Caco-2 (cell line): ENCODE measurements at regions of chr17 and their contacts with region 1.

Region 1: GRCh38 chr17:33520426-33521330 is 227.6 kb upstream of the ASIC2 start:
- DNase-seq: peak; percentile 70 to 75
- H3K4me3 ChIP-seq: no peak overlapping the region
- H3K4me3 Mint-ChIP-seq: no peak overlapping the region
- H3K27ac Mint-ChIP-seq: no peak overlapping the region
- H3K4me1 ChIP-seq: no peaks in the 10 kb centered on the region
- H3K4me1 Mint-ChIP-seq: no peaks in the 10 kb centered on the region
- H3K27me3 ChIP-seq: no peaks in the 10 kb centered on the region; the same call in none of the 2 replicates
- H3K27me3 Mint-ChIP-seq: peaks cover 16% of the 10 kb centered on the region
- CTCF ChIP-seq: peak; percentile 85 to 89

Region 2: GRCh38 chr17:33647956-33648355 is 127.3 kb after region 1 on chr17:
- CTCF ChIA-PET with region 1: interaction called, 3 read pairs
- POLR2A ChIA-PET with region 1: no interaction called
- intact Hi-C with region 1: loop called (anchors 5 kb)
- DNase-seq: peak in 1 of 2 experiments; percentile 28
- H3K4me3 ChIP-seq: no peak overlapping the region
- H3K4me3 Mint-ChIP-seq: no peak overlapping the region
- H3K27ac Mint-ChIP-seq: no peak overlapping the region
- H3K4me1 ChIP-seq: no peaks in the 10 kb centered on the region
- H3K4me1 Mint-ChIP-seq: no peaks in the 10 kb centered on the region
- H3K27me3 ChIP-seq: no peaks in the 10 kb centered on the region
- H3K27me3 Mint-ChIP-seq: peaks cover 29% of the 10 kb centered on the region
- CTCF ChIP-seq: peak; percentile 70 to 80

Region 3: GRCh38 chr17:33674685-33675084 is 154.0 kb after region 1 on chr17:
- CTCF ChIA-PET with region 1: no interaction called
- POLR2A ChIA-PET with region 1: no interaction called
- intact Hi-C with region 1: loop called (anchors 1 kb)
- DNase-seq: peak; percentile 63 to 65
- H3K4me3 ChIP-seq: no peak overlapping the region
- H3K4me3 Mint-ChIP-seq: no peak overlapping the region
- H3K27ac Mint-ChIP-seq: no peak overlapping the region
- H3K4me1 ChIP-seq: no peaks in the 10 kb centered on the region
- H3K4me1 Mint-ChIP-seq: no peaks in the 10 kb centered on the region
- H3K27me3 ChIP-seq: no peaks in the 10 kb centered on the region; the same call in none of the 2 replicates
- H3K27me3 Mint-ChIP-seq: peaks cover 18% of the 10 kb centered on the region
- CTCF ChIP-seq: peak; percentile 48 to 81